GM23248 (cell line): ENCODE measurements at regions of chr21 and their contacts with region 1.

Region 1: DNA sequence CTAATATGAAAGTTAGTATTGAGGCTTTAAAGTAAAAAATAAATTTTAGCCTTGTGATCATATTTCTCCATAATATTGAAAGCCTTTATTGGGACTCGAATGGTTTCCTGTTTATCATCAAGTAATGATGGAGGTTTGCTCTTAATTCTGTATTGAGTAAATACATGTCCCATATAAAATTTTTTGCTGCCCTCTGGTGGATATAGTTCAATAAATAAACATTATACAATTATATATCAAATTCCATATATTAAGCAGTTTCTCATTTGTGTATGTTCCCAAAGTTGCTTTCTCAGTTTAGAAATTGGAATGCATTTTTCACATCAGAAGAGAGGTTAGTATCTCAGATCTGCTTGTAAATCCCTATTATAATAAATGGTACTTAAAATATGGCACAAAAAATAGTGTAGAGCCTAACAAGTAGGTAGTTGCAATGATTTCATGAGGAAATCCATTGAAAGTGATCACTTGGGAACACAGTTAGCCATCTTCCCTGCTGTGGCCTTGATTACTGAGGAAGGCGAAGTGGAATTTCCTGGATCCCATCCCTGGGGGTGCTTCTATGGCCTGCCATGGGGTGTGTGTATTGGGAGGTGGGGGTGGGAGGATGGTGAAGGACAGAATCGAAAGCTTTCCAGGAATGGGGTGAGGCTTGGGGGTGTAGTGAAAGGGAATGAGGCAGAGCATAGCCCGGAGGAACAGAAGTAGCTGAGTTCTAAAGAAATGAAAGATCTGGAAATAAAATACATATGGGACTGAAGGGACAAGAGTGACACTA is 84.1 kb upstream of the C21orf91 start:
- DNase-seq: peak; percentile 59
- H3K4me3 ChIP-seq: no peak overlapping the region
- H3K27ac ChIP-seq: no peak overlapping the region
- H3K4me1 ChIP-seq: no peaks in the 10 kb centered on the region
- H3K27me3 ChIP-seq: 0 out of 2 replicates have a peak, but pooled peaks cover 6% of the 10 kb centered on the region

Region 2: DNA sequence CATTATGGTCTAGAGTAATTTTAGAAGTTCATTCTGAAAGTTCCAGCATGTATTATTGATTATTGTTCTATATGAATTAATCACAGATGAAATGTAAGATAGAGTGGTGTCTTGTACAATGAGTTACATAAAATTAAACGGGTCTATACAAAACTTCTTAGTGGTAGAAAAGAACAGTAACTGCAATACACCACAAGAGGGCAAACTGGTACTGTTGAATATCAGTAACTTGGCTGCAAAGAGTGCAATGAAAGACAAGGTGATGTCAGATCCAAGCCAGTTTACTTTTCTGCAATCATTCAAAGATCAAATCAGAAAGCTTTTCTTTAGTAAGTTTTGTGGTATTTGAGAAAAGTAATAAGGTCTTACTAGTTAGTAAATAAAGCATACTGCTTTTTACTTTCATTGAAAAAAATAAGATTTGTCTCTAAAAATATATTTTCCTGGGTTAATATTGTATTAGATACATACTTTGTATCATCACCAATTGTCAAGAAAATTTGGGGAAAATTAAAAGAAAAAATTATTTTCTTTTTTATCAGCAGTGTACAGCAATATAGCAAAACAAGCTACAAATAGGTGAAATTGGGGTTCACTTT is 224.1 kb before region 1 on chr21:
- in situ Hi-C with region 1: loop called (anchors 5 kb)
- DNase-seq: peak; percentile 79
- H3K4me3 ChIP-seq: no peak overlapping the region
- H3K27ac ChIP-seq: no peak overlapping the region
- H3K4me1 ChIP-seq: no peaks in the 10 kb centered on the region
- H3K27me3 ChIP-seq: peaks cover 13% of the 10 kb centered on the region

Region 3: GRCh38 chr21:17768840-17769446 is 134.3 kb before region 1 on chr21:
- in situ Hi-C with region 1: no loop called
- DNase-seq: peak; percentile 18
- H3K4me3 ChIP-seq: no peak overlapping the region
- H3K27ac ChIP-seq: no peak overlapping the region
- H3K4me1 ChIP-seq: no peaks in the 10 kb centered on the region
- H3K27me3 ChIP-seq: no peaks in the 10 kb centered on the region